SK-N-SH (cell line): ENCODE measurements at regions of chr9 and their contacts with region 1.

Region 1: DNA sequence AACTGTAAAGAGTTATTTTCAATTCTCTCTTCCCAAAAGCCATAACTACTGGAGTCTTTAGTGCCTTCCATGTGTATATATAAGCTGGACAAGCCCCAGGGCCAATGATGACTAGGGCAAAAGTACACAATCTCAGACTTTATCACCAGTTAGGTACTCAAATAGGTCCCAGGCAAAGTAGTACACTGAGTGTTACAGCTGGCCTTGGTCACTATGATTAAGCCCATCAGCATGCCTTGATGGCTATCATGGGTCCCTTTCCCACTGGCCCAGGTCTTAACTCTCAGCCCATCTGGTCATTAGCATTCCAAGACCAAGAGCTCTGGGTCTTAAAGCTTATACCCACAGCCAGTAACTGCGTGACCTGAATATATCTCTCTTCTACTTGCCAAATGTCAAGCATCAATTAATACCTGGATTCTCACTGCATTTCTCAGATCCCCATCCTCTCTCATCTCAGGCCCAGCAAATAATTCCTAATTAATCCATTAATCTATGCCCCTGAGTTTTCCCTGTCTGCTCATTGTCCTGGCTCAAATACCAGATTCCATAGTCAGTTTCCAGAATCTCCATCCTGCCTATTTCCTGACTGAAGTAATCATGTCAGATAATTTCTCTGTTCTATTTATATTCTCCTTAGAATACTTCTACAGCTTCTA is 62.3 kb downstream of the NR6A1 start:
- DNase-seq: peak; percentile 5
- H3K4me3 ChIP-seq: no peak overlapping the region
- H3K27ac ChIP-seq: peak overlapping the region; percentile 67 to 88
- H3K4me1 ChIP-seq: peaks cover 16 to 38% of the 10 kb centered on the region in 2 experiments; a peak in 2 of 4 replicates
- H3K27me3 ChIP-seq: no peaks in the 10 kb centered on the region
- CTCF ChIP-seq: no peak
- EP300 ChIP-seq: peak in 1 of 2 experiments; percentile 81; a peak in 2 of 4 replicates
- RAD21 ChIP-seq: no peak

Region 2: DNA sequence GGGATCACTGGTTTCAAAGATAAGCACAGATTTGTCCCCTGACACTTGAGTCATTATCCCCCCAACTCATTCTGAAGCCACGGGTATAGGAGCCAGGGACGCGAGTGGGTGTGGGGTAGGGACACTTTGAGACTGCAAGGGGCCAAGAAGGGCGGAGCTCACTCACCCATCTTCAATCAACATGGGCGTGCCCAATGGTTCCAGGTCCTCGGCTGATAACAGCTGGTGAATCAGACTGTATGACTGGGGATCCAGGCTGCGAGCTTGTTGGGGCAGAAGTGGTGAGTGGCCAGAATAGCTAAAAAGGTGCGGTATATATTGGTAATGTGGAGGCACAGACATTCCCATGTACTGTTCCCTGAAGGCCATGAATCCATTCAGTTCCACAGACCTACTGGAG is 170.8 kb before region 1 on chr9:
- CTCF ChIA-PET with region 1: interaction called, 10 read pairs
- POLR2A ChIA-PET with region 1: no interaction called
- DNase-seq: no peak
- H3K4me3 ChIP-seq: no peak overlapping the region
- H3K27ac ChIP-seq: no peak overlapping the region
- H3K4me1 ChIP-seq: no peaks in the 10 kb centered on the region
- H3K27me3 ChIP-seq: no peaks in the 10 kb centered on the region
- CTCF ChIP-seq: no peak
- EP300 ChIP-seq: no peak
- RAD21 ChIP-seq: no peak

Region 3: DNA sequence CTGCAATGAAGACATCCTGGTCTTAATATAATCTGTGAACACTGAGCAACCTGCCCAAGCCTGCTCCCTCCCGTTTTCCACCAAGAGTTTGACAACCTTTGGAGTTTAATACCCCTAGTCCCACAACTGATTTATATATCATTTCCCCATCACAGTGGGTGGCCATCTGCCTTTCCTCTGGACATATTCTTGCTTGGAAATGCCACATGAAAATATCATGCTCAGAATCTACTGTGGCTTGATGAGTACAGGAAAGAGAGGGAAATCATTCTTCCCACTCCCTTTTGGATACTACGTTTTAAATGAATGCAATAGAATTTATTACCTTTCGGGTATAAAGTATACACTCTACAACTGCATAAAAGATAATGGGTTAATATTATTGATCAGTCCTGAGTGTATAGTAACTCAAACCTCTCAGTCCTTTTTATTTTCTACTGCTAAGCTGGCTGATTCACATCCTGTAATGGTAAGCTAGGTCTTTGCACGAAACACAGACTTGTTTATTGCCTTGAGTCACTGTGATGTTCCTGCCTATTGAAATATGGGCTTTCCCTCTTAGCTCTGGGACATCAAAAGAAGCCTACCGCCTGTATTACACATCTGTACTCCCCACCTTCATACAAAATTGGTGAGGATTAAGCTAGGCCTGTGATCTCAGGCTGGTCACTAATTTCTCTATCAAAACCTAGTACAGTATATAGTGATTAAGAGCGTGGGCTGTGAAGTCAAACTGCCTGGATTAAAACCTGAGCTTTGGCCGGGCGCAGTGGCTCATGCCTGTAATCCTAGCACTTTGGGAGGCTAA is 134.0 kb before region 1 on chr9:
- CTCF ChIA-PET with region 1: interaction called, 18 read pairs
- POLR2A ChIA-PET with region 1: no interaction called
- DNase-seq: no peak
- H3K4me3 ChIP-seq: no peak overlapping the region
- H3K27ac ChIP-seq: no peak overlapping the region; a peak in 1 of 4 replicates
- H3K4me1 ChIP-seq: peaks cover 6 to 7% of the 10 kb centered on the region in 2 experiments; a peak in 3 of 4 replicates
- H3K27me3 ChIP-seq: no peaks in the 10 kb centered on the region
- CTCF ChIP-seq: no peak
- EP300 ChIP-seq: no peak
- RAD21 ChIP-seq: no peak

Region 4: DNA sequence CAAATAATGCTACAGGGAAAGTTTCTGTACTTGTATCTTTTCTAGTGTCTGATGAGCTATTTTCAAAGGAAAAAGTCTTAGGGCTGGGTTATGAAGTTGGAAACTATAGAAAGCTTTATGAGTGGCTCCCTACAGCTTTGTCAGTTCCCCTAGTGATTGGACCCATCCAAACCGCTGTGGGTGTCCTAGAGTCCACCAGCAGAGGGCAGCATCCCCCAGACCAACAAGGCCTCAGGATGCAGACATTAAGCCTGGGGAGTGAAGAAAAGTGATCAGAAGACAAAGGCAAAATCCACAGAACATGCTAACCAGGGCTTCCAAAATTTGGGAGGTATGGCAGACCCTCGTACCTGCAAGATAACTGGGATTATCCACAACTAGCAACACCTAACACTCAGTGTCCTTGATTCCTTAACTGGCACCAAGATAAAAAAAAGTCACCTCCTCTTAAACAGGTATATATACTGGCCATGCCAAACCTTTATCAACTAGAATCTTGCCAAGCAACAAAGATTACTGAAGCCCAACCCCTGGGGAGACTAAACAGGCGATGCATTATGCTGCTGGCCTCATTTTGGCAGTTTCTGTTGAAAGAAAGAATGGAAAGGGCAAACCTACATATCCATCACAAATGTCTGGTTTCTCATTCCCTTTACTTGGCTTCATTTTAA is 91.2 kb before region 1 on chr9:
- CTCF ChIA-PET with region 1: interaction called, 301 read pairs
- POLR2A ChIA-PET with region 1: interaction called, 3 read pairs
- DNase-seq: peak; percentile 78
- H3K4me3 ChIP-seq: no peak overlapping the region; a peak in 1 of 4 replicates
- H3K27ac ChIP-seq: no peak overlapping the region
- H3K4me1 ChIP-seq: peaks cover 8 to 10% of the 10 kb centered on the region in 2 experiments
- H3K27me3 ChIP-seq: no peaks in the 10 kb centered on the region
- CTCF ChIP-seq: peak; percentile 95
- EP300 ChIP-seq: no peak
- RAD21 ChIP-seq: peak; percentile 99

Region 5: DNA sequence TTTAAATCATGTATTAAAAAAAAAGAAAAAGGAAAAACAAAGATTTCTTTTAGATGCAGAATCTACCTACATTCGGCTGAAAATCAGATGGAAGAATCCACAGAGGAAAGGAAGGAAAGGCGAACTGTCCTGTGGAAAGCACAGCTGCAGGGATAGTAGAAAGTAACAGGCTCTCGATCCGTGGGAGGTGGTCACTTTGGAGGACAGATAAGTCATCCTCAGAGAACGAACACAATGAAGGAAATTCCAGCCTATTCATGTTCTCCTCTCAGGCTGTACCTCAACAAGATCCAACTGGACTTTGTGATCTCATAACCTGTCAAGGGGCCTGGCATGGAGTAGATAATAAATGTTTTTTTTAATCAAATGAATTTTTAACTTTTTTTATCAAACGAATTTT is 10.5 kb before region 1 on chr9:
- CTCF ChIA-PET with region 1: interaction called, 19 read pairs
- POLR2A ChIA-PET with region 1: no interaction called
- DNase-seq: peak; percentile 6
- H3K4me3 ChIP-seq: peak overlapping the region in 1 of 2 experiments; percentile 48; a peak in 2 of 4 replicates
- H3K27ac ChIP-seq: peak overlapping the region; percentile 77 to 91
- H3K4me1 ChIP-seq: peaks cover 16 to 35% of the 10 kb centered on the region in 2 experiments
- H3K27me3 ChIP-seq: no peaks in the 10 kb centered on the region
- CTCF ChIP-seq: no peak
- EP300 ChIP-seq: no peak
- RAD21 ChIP-seq: no peak

Region 6: GRCh38 chr9:124743686-124744348 is 35.1 kb after region 1 on chr9:
- CTCF ChIA-PET with region 1: interaction called, 14 read pairs
- POLR2A ChIA-PET with region 1: no interaction called
- DNase-seq: no peak
- H3K4me3 ChIP-seq: no peak overlapping the region
- H3K27ac ChIP-seq: peak overlapping the region; percentile 18 to 65; a peak in 3 of 4 replicates
- H3K4me1 ChIP-seq: peaks cover 8 to 36% of the 10 kb centered on the region in 2 experiments
- H3K27me3 ChIP-seq: no peaks in the 10 kb centered on the region
- CTCF ChIP-seq: no peak
- EP300 ChIP-seq: peak in 1 of 2 experiments; percentile 23; a peak in 1 of 4 replicates
- RAD21 ChIP-seq: no peak

Region 7: GRCh38 chr9:124771021-124771866 is 62.5 kb after region 1 on chr9 and contains the start of gene NR6A1:
- CTCF ChIA-PET with region 1: interaction called, 23 read pairs
- POLR2A ChIA-PET with region 1: no interaction called
- DNase-seq: peak; percentile 98
- H3K4me3 ChIP-seq: peak within 1 kb of the TSS; percentile 75 to 92
- H3K27ac ChIP-seq: peak within 1 kb of the TSS; percentile 71 to 82
- H3K4me1 ChIP-seq: peaks cover 8 to 16% of the 10 kb centered on the region in 2 experiments; a peak in 3 of 4 replicates
- H3K27me3 ChIP-seq: no peaks in the 10 kb centered on the region
- CTCF ChIP-seq: peak; percentile 47
- EP300 ChIP-seq: peak in 1 of 2 experiments; percentile 73; a peak in 1 of 4 replicates
- RAD21 ChIP-seq: no peak
- polyA plus RNA-seq, gene NR6A1: 1.2 and 1.4 TPM in 2 replicates

Region 8: GRCh38 chr9:124831642-124832364 is 123.0 kb after region 1 on chr9:
- CTCF ChIA-PET with region 1: no interaction called
- POLR2A ChIA-PET with region 1: no interaction called
- DNase-seq: no peak
- H3K4me3 ChIP-seq: no peak overlapping the region
- H3K27ac ChIP-seq: peak overlapping the region in 1 of 2 experiments; percentile 65; a peak in 2 of 4 replicates
- H3K4me1 ChIP-seq: peaks cover 14 to 24% of the 10 kb centered on the region in 2 experiments; a peak in 3 of 4 replicates
- H3K27me3 ChIP-seq: no peaks in the 10 kb centered on the region
- CTCF ChIP-seq: no peak
- EP300 ChIP-seq: no peak
- RAD21 ChIP-seq: no peak

Region 9: DNA sequence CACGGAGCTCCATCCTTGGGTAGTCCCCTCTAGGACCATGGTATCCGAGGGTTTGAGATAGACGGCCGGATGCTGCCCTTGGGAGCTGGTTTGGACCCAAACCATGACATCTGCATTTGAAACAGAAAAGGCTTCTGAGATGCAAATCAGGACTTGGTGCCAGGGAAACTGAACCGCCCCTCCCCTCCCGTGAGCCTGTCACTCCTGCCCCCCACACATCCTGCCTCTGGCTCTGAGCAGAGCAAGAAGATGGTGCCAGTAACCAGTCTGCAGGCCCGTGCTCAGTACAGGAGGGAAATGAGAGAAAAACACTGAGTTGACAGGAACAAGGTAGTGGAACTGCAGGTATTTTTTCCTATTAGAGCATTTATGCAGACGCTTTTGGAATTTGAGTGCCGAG is 171.7 kb after region 1 on chr9:
- CTCF ChIA-PET with region 1: no interaction called
- POLR2A ChIA-PET with region 1: no interaction called
- DNase-seq: no peak
- H3K4me3 ChIP-seq: no peak overlapping the region
- H3K27ac ChIP-seq: no peak overlapping the region
- H3K4me1 ChIP-seq: no peaks in the 10 kb centered on the region
- H3K27me3 ChIP-seq: no peaks in the 10 kb centered on the region
- CTCF ChIP-seq: no peak
- EP300 ChIP-seq: no peak
- RAD21 ChIP-seq: no peak